WTC11 (cell line): ENCODE measurements at regions of chr12 and their contacts with region 1.

Region 1: GRCh38 chr12:7907009-7907408 is 29.0 kb downstream of the SLC2A3 start:
- DNase-seq: peak; percentile 72
- ATAC-seq: peak; percentile 31
- H3K4me3 Mint-ChIP-seq: peak overlapping the region; percentile 30
- H3K27ac Mint-ChIP-seq: peak overlapping the region; percentile 100
- H3K4me1 Mint-ChIP-seq: peaks cover 47% of the 10 kb centered on the region
- H3K27me3 Mint-ChIP-seq: no peaks in the 10 kb centered on the region
- CTCF ChIP-seq: no peak

Region 2: DNA sequence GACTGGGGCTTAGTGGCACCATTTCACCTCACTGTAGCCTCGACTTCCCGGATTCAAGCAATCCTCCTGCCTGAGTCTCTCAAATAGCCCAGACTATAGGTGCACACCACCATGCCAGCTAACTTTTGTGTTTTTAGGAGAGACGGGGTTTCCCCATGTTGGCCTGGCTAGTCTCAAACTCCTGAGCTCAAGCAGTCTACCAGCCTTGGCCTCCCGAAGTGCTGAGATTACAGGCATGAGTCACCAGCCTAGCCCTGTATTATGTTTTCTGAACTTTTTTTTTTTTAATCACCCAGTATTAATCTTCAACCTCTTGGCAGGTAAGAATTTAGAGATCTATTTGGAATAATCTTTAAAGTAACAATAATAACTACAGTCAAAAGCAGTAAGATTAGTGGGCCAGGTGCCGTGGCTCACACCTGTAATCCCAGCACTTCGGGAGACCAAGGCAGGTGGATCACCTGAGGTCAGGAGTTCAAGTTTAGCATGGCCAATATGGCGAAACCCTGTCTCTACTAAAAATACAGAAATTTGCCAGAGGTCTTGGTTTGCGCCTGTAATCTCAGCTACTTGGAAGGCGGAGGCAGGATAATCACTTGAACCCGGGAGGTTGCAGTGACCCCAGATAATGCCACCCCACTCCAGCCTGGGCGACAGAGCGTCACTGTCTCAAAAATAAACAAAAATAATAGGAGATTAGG is 109.2 kb before region 1 on chr12:
- CTCF ChIA-PET with region 1: interaction called, 11 read pairs
- POLR2A ChIA-PET with region 1: interaction called, 6 read pairs
- DNase-seq: no peak
- ATAC-seq: no peak; the same call in 1 of the 2 replicates
- H3K4me3 Mint-ChIP-seq: peak overlapping the region; percentile 49
- H3K27ac Mint-ChIP-seq: peak overlapping the region; percentile 99
- H3K4me1 Mint-ChIP-seq: peaks cover 71% of the 10 kb centered on the region
- H3K27me3 Mint-ChIP-seq: no peaks in the 10 kb centered on the region
- CTCF ChIP-seq: no peak

Region 3: DNA sequence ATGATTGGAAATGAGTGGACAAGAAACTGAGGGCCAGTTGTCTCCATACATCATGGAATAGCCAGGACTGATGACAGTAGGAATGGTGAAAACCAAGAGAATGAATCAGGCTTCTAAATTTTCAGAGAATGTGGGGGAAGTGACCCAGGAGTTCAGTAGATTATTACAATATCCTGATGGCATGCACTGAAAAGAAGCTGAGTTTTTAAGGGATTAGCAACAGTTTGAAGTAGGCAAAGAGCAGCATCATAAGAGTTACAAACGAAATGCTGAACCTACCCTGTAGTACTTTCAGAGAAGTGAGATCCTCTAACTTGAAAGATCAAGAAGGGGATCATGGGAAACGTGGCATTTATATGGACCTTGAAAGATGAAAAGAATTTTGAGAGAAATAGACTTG is 47.5 kb before region 1 on chr12:
- CTCF ChIA-PET with region 1: interaction called, 15 read pairs
- POLR2A ChIA-PET with region 1: interaction called, 3 read pairs
- DNase-seq: no peak
- ATAC-seq: no peak
- H3K4me3 Mint-ChIP-seq: no peak overlapping the region
- H3K27ac Mint-ChIP-seq: peak overlapping the region; percentile 99
- H3K4me1 Mint-ChIP-seq: peaks cover 51% of the 10 kb centered on the region
- H3K27me3 Mint-ChIP-seq: no peaks in the 10 kb centered on the region; the same call in 1 of the 2 replicates
- CTCF ChIP-seq: no peak

Region 4: DNA sequence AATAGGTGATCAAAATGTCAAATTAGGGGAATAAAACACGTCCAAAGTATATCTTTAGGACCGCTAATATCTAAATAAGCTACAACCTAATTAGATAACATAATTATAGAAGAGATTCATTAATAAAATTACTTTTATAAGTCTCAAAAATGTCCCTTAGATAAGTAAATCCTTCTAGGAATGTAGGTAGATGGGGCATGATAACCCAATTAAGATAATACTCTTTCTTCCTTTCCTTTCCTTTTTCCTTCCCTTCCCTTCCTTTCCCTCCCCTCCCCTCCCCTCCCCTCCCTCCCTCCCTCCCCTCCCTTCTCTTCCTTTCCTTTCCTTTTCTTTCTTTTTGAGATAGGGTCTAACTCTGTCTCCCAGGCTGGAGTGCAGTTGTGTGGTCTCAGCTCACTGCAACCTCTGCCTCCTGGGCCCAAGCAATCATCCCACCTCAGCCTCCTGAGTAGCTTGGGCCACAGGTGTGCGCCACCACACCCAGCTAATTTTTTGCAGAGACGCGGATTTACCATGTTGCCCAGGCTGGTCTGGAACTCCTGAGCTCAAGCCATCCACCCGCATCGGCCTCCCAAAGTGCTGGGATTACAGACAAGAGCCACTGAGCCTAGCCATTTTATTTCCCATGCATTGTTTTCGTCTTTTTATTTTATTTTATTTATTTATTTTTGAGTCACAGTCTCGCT is 40.1 kb after region 1 on chr12:
- CTCF ChIA-PET with region 1: no interaction called
- POLR2A ChIA-PET with region 1: no interaction called
- DNase-seq: peak; percentile 2
- ATAC-seq: no peak
- H3K4me3 Mint-ChIP-seq: no peak overlapping the region
- H3K27ac Mint-ChIP-seq: no peak overlapping the region
- H3K4me1 Mint-ChIP-seq: peaks cover 7% of the 10 kb centered on the region
- H3K27me3 Mint-ChIP-seq: no peaks in the 10 kb centered on the region
- CTCF ChIP-seq: no peak